BJ (cell line): ENCODE measurements at regions of chr3 and their contacts with region 1.

Region 1: DNA sequence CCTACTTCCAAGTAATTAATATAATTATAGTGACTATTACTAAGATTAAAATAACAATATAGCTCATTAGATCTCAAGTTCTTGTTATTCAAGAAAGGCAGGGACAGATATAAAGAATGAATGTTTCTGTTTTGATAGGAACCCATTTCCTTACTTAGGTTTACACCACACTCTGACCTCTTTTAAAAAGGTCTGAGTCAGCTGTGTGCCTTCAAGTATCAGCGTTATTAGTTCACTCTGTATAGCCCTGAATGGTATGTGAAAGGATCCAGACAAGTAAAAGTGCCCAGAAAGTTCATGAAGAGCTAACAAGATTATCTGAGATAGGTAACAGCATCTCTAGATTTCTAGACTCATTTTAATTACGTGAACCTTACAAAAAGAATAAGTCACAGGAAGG is 28.9 kb downstream of the PDCD10 start:
- DNase-seq: no peak
- H3K4me3 ChIP-seq: no peak overlapping the region
- H3K27me3 ChIP-seq: no peaks in the 10 kb centered on the region
- CTCF ChIP-seq: no peak

Region 2: GRCh38 chr3:167783781-167784180 is 77.9 kb after region 1 on chr3:
- CTCF ChIA-PET with region 1: no interaction called
- POLR2A ChIA-PET with region 1: no interaction called
- DNase-seq: no peak
- H3K4me3 ChIP-seq: no peak overlapping the region
- H3K27me3 ChIP-seq: no peaks in the 10 kb centered on the region
- CTCF ChIP-seq: no peak

Region 3: GRCh38 chr3:168517249-168518071 is 811.6 kb after region 1 on chr3:
- CTCF ChIA-PET with region 1: no interaction called
- POLR2A ChIA-PET with region 1: interaction called, 13 read pairs
- DNase-seq: no peak
- H3K4me3 ChIP-seq: no peak overlapping the region
- H3K27me3 ChIP-seq: no peaks in the 10 kb centered on the region
- CTCF ChIP-seq: no peak